AG04450 (cell line): ENCODE measurements at regions of chr22 and their contacts with region 1.

Region 1: DNA sequence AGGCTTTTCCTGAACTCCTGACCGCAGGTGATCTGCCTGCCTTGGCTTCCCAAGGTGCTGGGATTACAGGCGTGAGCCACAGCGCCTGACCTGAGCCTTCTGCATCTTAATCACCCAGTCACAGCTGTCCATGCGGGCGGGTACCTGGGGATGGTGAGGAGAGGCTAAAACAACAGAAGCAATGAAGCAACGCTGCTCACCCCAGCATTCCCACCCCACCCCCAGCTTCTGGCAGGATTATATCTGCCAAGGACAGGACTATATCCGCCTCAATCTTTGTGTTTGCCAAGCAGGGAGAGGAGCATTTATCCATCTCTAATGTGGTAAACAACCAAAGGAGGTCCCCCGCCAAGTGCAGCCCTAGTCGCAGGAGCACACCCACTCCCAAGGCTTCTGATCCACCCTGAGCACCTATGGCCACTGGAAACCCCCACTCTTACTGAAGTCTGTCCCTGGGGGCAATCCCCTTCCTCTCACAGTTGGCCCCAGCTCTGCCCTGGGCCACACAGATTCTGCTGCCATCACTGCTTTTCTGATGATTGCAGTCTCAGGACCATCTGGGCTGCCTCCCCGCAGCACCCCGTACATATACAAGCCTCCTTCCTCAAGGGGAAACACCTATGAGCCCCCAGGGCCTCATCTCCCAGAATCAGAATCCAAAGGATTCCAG is 8.8 kb upstream of the LGALS2 start:
- DNase-seq: no peak
- H3K4me3 ChIP-seq: no peak overlapping the region
- H3K27ac ChIP-seq: no peak overlapping the region
- H3K27me3 ChIP-seq: peaks cover 5% of the 10 kb centered on the region
- CTCF ChIP-seq: no peak

Region 2: GRCh38 chr22:37538590-37539357 is 49.9 kb before region 1 on chr22:
- CTCF ChIA-PET with region 1: interaction called, 192 read pairs
- POLR2A ChIA-PET with region 1: interaction called, 6 read pairs
- DNase-seq: peak; percentile 89
- H3K4me3 ChIP-seq: no peak overlapping the region
- H3K27ac ChIP-seq: no peak overlapping the region
- H3K27me3 ChIP-seq: no peaks in the 10 kb centered on the region
- CTCF ChIP-seq: peak; percentile 91

Region 3: DNA sequence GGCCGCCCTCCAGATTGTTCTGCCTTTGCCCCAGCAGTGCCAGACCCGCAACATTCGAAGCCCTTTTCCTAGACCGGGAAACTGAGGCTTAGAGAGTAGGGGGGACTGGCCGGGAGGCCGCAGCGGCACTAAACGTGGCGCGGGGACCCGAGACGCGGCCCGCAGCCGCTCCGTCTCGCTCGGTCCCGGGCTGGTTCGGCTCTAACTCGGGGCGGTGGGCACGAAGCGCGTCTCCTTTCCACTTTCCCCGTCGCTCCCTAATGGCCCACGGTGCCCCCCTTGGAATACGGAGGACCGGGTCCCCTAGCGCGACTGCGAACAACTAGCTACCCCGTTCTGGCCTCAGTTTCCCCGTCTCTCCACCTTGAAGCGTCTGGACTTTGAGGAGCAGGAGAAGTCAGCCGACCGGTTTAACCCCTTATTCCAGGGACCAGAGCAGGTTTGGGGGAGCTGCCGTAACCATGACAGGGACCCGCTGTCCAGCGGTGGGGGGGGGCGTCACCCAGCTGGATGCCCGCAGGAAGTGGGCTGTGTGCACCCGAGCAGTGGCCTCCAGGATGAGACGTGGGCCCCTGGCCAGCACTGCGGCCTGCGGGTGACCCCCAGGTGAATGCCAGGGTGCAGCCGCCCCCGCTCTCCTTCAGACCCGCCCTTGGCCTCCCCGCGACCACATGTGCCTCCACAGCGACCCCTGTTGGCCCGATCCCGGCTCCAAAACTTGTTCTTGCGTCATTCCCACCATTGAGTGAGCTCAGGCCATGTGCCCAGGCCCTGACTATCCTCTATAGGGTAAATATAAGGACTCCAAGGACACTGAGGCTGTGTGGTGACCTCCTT is 27.3 kb before region 1 on chr22:
- CTCF ChIA-PET with region 1: interaction called, 65 read pairs
- POLR2A ChIA-PET with region 1: interaction called, 12 read pairs
- DNase-seq: peak; percentile 63
- H3K4me3 ChIP-seq: peak overlapping the region; percentile 82
- H3K27ac ChIP-seq: peak overlapping the region; percentile 94
- H3K27me3 ChIP-seq: peaks cover 3% of the 10 kb centered on the region
- CTCF ChIP-seq: peak; percentile 84

Region 4: DNA sequence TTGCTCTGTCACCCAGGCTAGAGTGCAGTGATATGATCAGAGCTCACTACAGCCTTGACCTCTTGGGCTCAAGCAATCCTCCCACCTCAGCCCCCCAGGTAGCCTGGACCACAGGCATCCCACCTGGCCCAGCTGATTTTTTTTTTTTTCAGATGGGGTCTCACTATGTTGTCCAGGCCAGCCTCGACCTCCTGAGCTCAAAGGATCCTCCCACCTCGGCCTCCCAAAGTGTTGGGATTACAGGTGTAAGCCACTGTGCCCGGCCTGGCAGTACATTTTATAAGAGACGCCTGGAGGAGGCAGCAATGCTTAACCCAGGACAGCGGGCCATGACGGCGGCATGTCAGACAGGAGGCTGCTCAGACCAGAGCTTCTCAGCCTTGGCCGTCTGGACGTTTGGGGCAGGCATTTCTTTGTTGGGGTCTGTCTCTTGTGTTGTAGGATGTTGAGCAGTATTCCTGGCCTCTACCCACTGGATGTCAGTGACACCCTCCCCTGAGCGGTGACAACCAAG is 13.1 kb before region 1 on chr22:
- CTCF ChIA-PET with region 1: interaction called, 65 read pairs
- POLR2A ChIA-PET with region 1: interaction called, 29 read pairs
- DNase-seq: no peak
- H3K4me3 ChIP-seq: no peak overlapping the region
- H3K27ac ChIP-seq: no peak overlapping the region
- H3K27me3 ChIP-seq: peaks cover 1% of the 10 kb centered on the region
- CTCF ChIP-seq: no peak

Region 5: DNA sequence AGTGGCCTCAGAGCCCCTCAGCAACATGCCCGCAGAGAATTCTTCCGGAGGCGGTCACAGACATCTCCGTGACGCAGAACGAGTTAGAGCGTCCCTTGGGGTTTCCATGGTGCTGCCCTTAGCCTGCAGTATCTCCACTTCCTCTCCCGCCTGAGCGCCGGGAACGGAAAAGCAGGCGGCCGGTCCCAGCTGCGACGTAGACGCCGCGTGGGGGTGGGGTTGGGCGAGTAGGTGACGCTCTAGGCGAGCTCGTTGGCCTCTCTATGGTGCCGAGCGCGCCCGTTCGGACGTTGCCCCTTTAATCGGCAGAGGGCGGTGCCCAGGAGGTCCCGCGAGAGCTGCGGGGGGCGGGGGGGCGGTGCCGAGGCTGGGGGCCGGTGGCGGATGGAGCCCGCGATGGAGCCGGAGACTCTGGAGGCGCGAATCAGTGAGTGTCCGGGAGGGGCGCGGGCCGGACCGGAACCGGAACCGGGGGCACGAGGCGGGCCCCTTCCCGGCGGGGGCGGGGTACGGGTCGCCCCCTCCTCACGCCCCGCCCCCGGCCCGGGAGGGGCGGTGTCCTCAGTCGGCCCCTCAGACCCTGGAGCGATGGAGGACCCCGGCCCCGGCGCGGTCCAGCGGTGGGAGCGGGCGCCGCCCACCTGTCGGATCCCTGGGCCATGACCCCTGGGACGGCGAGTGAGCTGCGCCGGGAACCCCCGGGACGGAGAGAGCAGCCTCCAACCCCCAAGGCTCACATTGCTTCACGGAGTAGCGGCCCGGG is 20.0 kb after region 1 on chr22 and contains the start of gene GGA1:
- CTCF ChIA-PET with region 1: interaction called, 37 read pairs
- POLR2A ChIA-PET with region 1: interaction called, 6 read pairs
- DNase-seq: peak; percentile 90
- H3K4me3 ChIP-seq: peak within 1 kb of the TSS; percentile 82
- H3K27ac ChIP-seq: peak within 1 kb of the TSS; percentile 99
- H3K27me3 ChIP-seq: peaks cover 12% of the 10 kb centered on the region
- CTCF ChIP-seq: no peak
- polyA plus RNA-seq, gene GGA1: 24.7 and 26.1 TPM in 2 replicates